Activated CD4-positive, alpha-beta memory T cell treated with anti-CD3 and anti-CD28 coated beads, Interleukin-2, amount 10 ng/mL, durations not matched to agents 7 days and 5 days (primary cell): ENCODE measurements at regions of chr20 and their contacts with region 1.

Region 1: DNA sequence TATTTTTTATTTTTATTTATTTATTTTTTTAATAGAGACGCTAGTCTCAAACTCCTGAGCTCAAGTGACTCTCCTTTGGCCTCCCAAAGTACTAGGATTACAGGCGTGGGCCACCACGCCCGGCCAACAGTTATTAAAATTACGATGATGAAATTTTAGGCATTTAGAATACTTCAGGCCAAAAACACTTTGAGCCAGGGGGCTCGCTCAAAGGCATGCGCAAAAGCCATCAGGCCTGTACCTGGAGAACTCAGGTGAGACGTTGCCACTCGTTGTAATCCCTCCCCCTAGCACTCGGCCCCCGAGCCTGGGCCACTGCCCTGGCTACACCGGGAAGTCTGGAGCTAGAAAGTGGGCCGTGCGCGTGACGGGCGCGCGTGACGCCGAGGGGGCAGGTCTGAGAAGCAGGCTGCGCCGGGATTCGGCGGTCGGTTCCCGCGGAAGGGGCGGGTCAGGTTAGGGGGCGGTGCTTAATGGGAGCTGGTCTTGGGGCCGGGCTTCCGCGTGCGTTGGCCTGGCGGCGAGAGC is 337 bp upstream of the CBFA2T2 start:
- DNase-seq: peak; percentile 99
- H3K4me3 Mint-ChIP-seq: peak overlapping the region; percentile 84
- H3K27ac Mint-ChIP-seq: peak overlapping the region; percentile 75
- H3K4me1 Mint-ChIP-seq: peaks cover 14% of the 10 kb centered on the region
- H3K27me3 Mint-ChIP-seq: no peaks in the 10 kb centered on the region

Region 2: GRCh38 chr20:33423141-33423834 is 66.3 kb before region 1 on chr20:
- CTCF ChIA-PET with region 1: no interaction called
- POLR2A ChIA-PET with region 1: no interaction called
- DNase-seq: no peak
- H3K4me3 Mint-ChIP-seq: no peak overlapping the region
- H3K27ac Mint-ChIP-seq: no peak overlapping the region
- H3K4me1 Mint-ChIP-seq: no peaks in the 10 kb centered on the region
- H3K27me3 Mint-ChIP-seq: no peaks in the 10 kb centered on the region

Region 3: GRCh38 chr20:33443512-33444239 is 45.9 kb before region 1 on chr20 and contains the start of gene SNTA1:
- CTCF ChIA-PET with region 1: interaction called, 3 read pairs
- POLR2A ChIA-PET with region 1: interaction called, 11 read pairs
- DNase-seq: peak; percentile 92
- H3K4me3 Mint-ChIP-seq: peak within 1 kb of the TSS; percentile 87
- H3K27ac Mint-ChIP-seq: peak within 1 kb of the TSS; percentile 89
- H3K4me1 Mint-ChIP-seq: peaks cover 23% of the 10 kb centered on the region
- H3K27me3 Mint-ChIP-seq: peaks cover 12% of the 10 kb centered on the region
- total RNA-seq, gene SNTA1: 5.6 to 6.9 TPM

Region 4: DNA sequence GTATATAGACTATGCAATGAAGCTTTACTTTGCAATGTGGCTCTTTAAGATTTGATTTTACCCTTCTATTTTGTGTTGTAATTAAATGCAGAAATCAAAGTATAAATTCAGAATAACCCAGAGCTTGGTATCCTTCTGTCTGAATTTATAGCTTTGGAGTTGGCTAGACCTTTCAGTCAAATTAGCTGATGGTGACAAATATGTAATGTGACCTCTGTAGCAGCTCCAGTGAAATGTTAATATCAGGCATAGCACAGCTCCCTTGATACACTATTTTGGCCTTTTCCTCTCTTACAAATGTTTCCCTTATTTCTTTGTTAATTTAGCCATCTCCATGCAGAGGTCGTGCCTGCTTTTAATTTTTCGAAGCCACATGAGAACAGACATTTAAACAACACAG is 11.4 kb after region 1 on chr20:
- CTCF ChIA-PET with region 1: interaction called, 3 read pairs
- POLR2A ChIA-PET with region 1: interaction called, 11 read pairs
- DNase-seq: no peak
- H3K4me3 Mint-ChIP-seq: no peak overlapping the region
- H3K27ac Mint-ChIP-seq: no peak overlapping the region
- H3K4me1 Mint-ChIP-seq: peaks cover 3% of the 10 kb centered on the region
- H3K27me3 Mint-ChIP-seq: no peaks in the 10 kb centered on the region

Region 5: GRCh38 chr20:33554914-33555420 is 65.4 kb after region 1 on chr20:
- CTCF ChIA-PET with region 1: no interaction called
- POLR2A ChIA-PET with region 1: interaction called, 11 read pairs
- DNase-seq: peak; percentile 39
- H3K4me3 Mint-ChIP-seq: peak overlapping the region; percentile 52
- H3K27ac Mint-ChIP-seq: peak overlapping the region; percentile 91
- H3K4me1 Mint-ChIP-seq: peaks cover 20% of the 10 kb centered on the region
- H3K27me3 Mint-ChIP-seq: no peaks in the 10 kb centered on the region

Region 6: DNA sequence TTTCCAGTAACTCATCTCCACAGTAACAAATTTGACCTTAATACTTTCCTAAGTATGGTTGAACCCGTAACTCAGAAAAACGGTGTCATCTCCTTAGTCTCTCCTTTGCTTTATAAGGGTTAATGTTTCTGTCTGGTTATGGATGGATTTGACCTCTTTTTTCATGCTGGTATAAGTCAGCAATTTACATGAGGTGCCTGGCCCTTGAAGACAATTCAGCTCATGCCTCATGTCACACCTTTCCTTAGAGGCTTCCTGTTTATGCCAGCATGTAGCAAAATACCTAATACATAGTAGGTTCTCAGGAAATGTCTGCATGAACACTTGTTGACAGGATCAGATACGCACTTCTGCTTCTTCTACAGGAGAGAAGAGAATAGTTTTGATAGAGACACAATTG is 134.8 kb after region 1 on chr20:
- CTCF ChIA-PET with region 1: no interaction called
- POLR2A ChIA-PET with region 1: no interaction called
- DNase-seq: no peak
- H3K4me3 Mint-ChIP-seq: no peak overlapping the region
- H3K27ac Mint-ChIP-seq: peak overlapping the region; percentile 36
- H3K4me1 Mint-ChIP-seq: peaks cover 13% of the 10 kb centered on the region
- H3K27me3 Mint-ChIP-seq: no peaks in the 10 kb centered on the region

Region 7: GRCh38 chr20:33679758-33680485 is 190.4 kb after region 1 on chr20:
- CTCF ChIA-PET with region 1: no interaction called
- POLR2A ChIA-PET with region 1: interaction called, 17 read pairs
- DNase-seq: peak; percentile 78
- H3K4me3 Mint-ChIP-seq: no peak overlapping the region
- H3K27ac Mint-ChIP-seq: peak overlapping the region; percentile 90
- H3K4me1 Mint-ChIP-seq: peaks cover 81% of the 10 kb centered on the region
- H3K27me3 Mint-ChIP-seq: no peaks in the 10 kb centered on the region

Region 8: GRCh38 chr20:33686100-33686983 is 196.8 kb after region 1 on chr20 and contains the start of gene E2F1:
- CTCF ChIA-PET with region 1: no interaction called
- POLR2A ChIA-PET with region 1: interaction called, 17 read pairs
- DNase-seq: peak; percentile 98
- H3K4me3 Mint-ChIP-seq: peak within 1 kb of the TSS; percentile 94
- H3K27ac Mint-ChIP-seq: peak within 1 kb of the TSS; percentile 94
- H3K4me1 Mint-ChIP-seq: peaks cover 81% of the 10 kb centered on the region
- H3K27me3 Mint-ChIP-seq: no peaks in the 10 kb centered on the region
- total RNA-seq, gene E2F1: 60.0 to 61.7 TPM

Region 9: GRCh38 chr20:33992923-33993575 is 503.5 kb after region 1 on chr20:
- CTCF ChIA-PET with region 1: no interaction called
- POLR2A ChIA-PET with region 1: interaction called, 16 read pairs
- DNase-seq: peak; percentile 100
- H3K4me3 Mint-ChIP-seq: peak overlapping the region; percentile 97
- H3K27ac Mint-ChIP-seq: peak overlapping the region; percentile 98
- H3K4me1 Mint-ChIP-seq: peaks cover 51% of the 10 kb centered on the region
- H3K27me3 Mint-ChIP-seq: no peaks in the 10 kb centered on the region